A549 (cell line): ENCODE measurements at regions of chr2 and their contacts with region 1.

Region 1: DNA sequence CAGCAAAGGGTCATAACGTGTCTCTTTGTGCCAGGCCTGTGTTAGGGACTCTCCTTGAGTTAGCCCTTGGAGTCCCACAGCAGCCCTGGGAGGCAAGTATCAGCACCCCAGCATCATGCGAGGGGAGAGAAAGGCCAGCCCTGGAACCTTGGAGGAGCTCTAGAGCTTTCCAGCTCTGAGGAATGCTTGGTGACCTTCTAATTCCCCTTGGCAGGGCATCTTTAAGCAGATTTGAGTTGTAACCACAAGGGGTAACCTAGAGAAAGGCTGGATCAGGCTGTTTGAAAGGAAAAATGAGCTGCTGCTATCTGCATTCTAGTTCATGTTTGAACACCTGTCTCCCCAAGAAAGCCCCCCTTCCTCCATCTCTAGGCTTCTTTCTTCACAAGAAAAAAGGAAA is 23.8 kb upstream of the ODC1 start:
- DNase-seq: peak in 1 of 2 experiments; percentile 37
- ATAC-seq: peak; percentile 72 to 75
- H3K4me3 ChIP-seq: no peak overlapping the region
- H3K27ac ChIP-seq: no peak overlapping the region
- H3K4me1 ChIP-seq: no peaks in the 10 kb centered on the region
- CTCF ChIP-seq: no peak
- EP300 ChIP-seq: no peak
- POLR2A ChIP-seq: no peak
- RAD21 ChIP-seq: no peak

Region 2: DNA sequence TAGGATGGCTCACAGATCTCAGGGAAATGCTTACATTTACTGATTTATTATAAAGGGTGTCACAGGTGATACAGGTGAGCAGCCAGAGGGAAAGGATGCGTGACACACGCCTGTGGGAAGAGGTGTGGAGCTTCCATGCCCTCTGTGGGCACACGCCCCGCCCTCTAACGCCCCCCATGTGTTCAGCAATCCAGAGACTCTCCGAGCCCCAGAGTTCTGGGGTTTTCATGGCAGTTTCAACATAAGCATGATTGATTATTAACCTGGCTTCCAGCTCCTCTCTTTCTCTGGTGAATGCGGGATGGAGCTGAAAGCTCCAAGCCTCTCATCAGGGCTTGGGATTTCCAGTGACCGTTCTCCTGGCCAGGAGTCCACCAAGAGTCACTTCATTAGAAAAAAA is 10.5 kb after region 1 on chr2:
- CTCF ChIA-PET with region 1: interaction called, 11 read pairs
- POLR2A ChIA-PET with region 1: no interaction called
- DNase-seq: no peak
- ATAC-seq: no peak
- H3K4me3 ChIP-seq: no peak overlapping the region
- H3K27ac ChIP-seq: no peak overlapping the region
- H3K4me1 ChIP-seq: peaks cover 18% of the 10 kb centered on the region
- CTCF ChIP-seq: no peak
- EP300 ChIP-seq: no peak
- POLR2A ChIP-seq: no peak
- RAD21 ChIP-seq: no peak